Endothelial cell of umbilical vein (primary cell): ENCODE measurements at regions of chr16 and their contacts with region 1.

Region 1: GRCh38 chr16:10509534-10510025 is 70.8 kb downstream of the EMP2 start:
- DNase-seq: peak; percentile 62
- H3K4me3 ChIP-seq: no peak overlapping the region
- H3K27ac ChIP-seq: no peak overlapping the region
- H3K4me1 ChIP-seq: no peaks in the 10 kb centered on the region
- H3K27me3 ChIP-seq: peaks cover 0 to 4% of the 10 kb centered on the region in 2 experiments
- CTCF ChIP-seq: peak; percentile 57 to 65
- POLR2A ChIP-seq: no peak

Region 2: GRCh38 chr16:9159839-9160550 is 1349.6 kb before region 1 on chr16:
- CTCF ChIA-PET with region 1: interaction called, 15 read pairs
- POLR2A ChIA-PET with region 1: interaction called, 3 read pairs
- dilution Hi-C with region 1: no loop called
- intact Hi-C with region 1: loop called (anchors 2 kb)
- DNase-seq: peak; percentile 44
- H3K4me3 ChIP-seq: no peak overlapping the region
- H3K27ac ChIP-seq: no peak overlapping the region
- H3K4me1 ChIP-seq: no peaks in the 10 kb centered on the region
- H3K27me3 ChIP-seq: no peaks in the 10 kb centered on the region
- CTCF ChIP-seq: peak; percentile 43 to 70
- POLR2A ChIP-seq: no peak

Region 3: DNA sequence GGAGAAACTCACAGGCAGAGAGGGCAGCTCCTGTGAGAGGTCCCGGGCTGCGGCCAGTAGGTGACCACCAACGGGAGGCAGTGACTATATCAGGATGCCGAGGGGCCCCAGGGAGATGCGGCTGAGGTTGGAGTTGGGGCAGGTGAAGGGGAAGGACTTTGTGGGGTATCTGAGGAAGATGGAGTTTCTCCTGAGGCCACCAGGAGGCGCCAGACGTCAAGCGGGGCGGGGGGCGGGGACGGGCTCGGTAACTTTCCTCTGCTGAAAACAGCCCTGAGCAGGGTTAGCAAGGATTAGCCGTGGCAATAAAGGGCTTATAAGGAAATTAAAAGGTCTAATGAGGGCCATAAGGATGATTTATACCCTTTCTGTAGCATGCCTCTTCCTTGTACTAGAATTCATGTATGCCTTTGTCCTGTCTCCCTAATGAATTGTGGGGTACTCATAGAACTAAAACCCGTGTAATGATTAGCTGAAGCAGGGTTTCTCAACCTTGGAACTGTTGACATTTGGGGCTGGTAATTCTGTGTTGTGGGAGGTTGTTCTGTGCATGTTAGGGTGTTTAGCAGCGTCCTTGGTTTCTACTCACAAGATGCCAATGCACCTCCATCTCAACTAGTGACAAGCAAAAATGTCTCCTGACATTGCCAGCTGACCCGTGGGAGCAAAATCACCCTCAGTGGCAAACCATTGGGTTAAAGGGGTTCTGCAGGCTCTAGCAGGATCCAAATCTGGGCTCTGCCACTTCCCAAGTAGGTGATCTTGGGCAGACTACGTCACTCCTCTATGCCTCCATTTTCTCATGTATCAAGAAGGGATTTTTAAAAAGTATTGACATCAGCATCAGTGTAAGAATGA is 252.6 kb before region 1 on chr16:
- CTCF ChIA-PET with region 1: interaction called, 90 read pairs
- POLR2A ChIA-PET with region 1: no interaction called
- dilution Hi-C with region 1: no loop called
- intact Hi-C with region 1: loop called (anchors 1 kb)
- DNase-seq: peak; percentile 7
- H3K4me3 ChIP-seq: no peak overlapping the region
- H3K27ac ChIP-seq: no peak overlapping the region
- H3K4me1 ChIP-seq: no peaks in the 10 kb centered on the region
- H3K27me3 ChIP-seq: no peaks in the 10 kb centered on the region
- CTCF ChIP-seq: peak; percentile 43 to 67
- POLR2A ChIP-seq: no peak

Region 4: DNA sequence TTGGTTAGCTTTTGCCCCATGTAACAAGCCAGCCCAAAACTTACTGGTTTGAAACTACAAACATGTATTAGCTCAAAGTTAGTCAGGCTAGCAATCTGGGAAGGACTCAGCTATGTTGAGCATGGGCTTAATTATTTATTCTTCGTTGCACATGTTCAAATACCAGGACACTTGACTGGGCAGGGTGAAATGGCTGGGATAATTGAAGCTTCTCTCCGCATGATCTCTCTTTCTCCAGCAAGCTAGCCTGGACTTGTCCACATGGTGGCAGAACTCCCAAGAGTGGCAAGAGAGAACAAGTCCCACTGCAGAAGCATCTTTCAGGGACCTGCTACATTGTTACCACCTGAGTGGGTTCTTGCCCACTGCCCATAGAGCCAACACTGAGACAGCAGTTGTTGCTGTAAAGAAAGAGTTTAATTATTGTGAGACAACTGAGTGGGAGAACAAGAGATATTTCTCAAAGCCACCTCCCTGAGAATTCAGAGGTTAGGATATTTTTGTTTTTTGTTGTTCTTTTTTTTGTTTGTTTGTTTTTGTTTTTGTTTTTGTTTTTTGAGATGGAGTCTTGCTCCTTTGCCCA is 140.5 kb before region 1 on chr16:
- CTCF ChIA-PET with region 1: interaction called, 32 read pairs
- POLR2A ChIA-PET with region 1: interaction called, 7 read pairs
- dilution Hi-C with region 1: no loop called
- intact Hi-C with region 1: loop called (anchors 1 kb)
- DNase-seq: no peak
- H3K4me3 ChIP-seq: no peak overlapping the region
- H3K27ac ChIP-seq: no peak overlapping the region
- H3K4me1 ChIP-seq: no peaks in the 10 kb centered on the region
- H3K27me3 ChIP-seq: no peaks in the 10 kb centered on the region
- CTCF ChIP-seq: peak in 1 of 2 donors; percentile 23
- POLR2A ChIP-seq: no peak

Region 5: GRCh38 chr16:10447289-10447688 is 62.3 kb before region 1 on chr16:
- CTCF ChIA-PET with region 1: no interaction called
- POLR2A ChIA-PET with region 1: no interaction called
- dilution Hi-C with region 1: no loop called
- intact Hi-C with region 1: no loop called
- DNase-seq: no peak
- H3K4me3 ChIP-seq: no peak overlapping the region
- H3K27ac ChIP-seq: no peak overlapping the region
- H3K4me1 ChIP-seq: no peaks in the 10 kb centered on the region
- H3K27me3 ChIP-seq: no peaks in the 10 kb centered on the region
- CTCF ChIP-seq: no peak
- POLR2A ChIP-seq: no peak

Region 6: DNA sequence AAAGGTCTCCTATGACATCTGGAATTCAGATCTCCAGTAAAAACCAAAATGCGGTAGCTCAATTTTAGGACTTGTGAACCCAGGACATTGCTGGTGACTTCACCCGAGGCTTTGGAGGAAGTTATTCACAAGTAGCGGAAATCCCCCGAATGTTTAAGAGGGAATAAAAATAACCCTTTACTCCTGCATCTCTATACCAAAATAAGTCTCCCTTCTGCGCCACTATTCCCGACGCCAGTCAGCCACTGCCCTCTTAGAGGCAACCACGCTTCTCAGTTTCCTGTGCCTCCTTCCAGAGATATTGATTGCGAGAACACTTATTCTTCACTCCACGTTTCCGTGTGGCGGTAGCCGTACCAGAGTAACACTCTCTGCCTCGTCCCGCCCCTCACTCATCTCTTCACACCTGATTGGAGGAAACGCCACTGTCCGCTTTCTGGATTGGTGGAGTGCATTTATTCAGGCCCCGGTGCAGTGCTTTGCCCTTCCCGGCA is 43.5 kb after region 1 on chr16:
- CTCF ChIA-PET with region 1: no interaction called
- POLR2A ChIA-PET with region 1: no interaction called
- dilution Hi-C with region 1: no loop called
- intact Hi-C with region 1: no loop called
- DNase-seq: peak; percentile 13
- H3K4me3 ChIP-seq: no peak overlapping the region
- H3K27ac ChIP-seq: no peak overlapping the region
- H3K4me1 ChIP-seq: no peaks in the 10 kb centered on the region
- H3K27me3 ChIP-seq: no peaks in the 10 kb centered on the region
- CTCF ChIP-seq: no peak
- POLR2A ChIP-seq: no peak

Region 7: GRCh38 chr16:10694830-10695229 is 185.2 kb after region 1 on chr16 and contains the start of gene TEKT5:
- CTCF ChIA-PET with region 1: no interaction called
- POLR2A ChIA-PET with region 1: no interaction called
- dilution Hi-C with region 1: no loop called
- intact Hi-C with region 1: no loop called
- DNase-seq: no peak
- H3K4me3 ChIP-seq: no peak within 1 kb of the TSS
- H3K27ac ChIP-seq: no peak within 1 kb of the TSS
- H3K4me1 ChIP-seq: no peaks in the 10 kb centered on the region
- H3K27me3 ChIP-seq: no peaks in the 10 kb centered on the region
- CTCF ChIP-seq: no peak
- POLR2A ChIP-seq: no peak
- total RNA-seq, gene TEKT5: not detected in 2 replicates

Region 8: GRCh38 chr16:10731790-10732189 is 222.2 kb after region 1 on chr16:
- CTCF ChIA-PET with region 1: interaction called, 189 read pairs
- POLR2A ChIA-PET with region 1: no interaction called
- dilution Hi-C with region 1: no loop called
- intact Hi-C with region 1: no loop called
- DNase-seq: no peak
- H3K4me3 ChIP-seq: no peak overlapping the region
- H3K27ac ChIP-seq: no peak overlapping the region
- H3K4me1 ChIP-seq: no peaks in the 10 kb centered on the region
- H3K27me3 ChIP-seq: no peaks in the 10 kb centered on the region
- CTCF ChIP-seq: no peak
- POLR2A ChIP-seq: no peak

Region 9: DNA sequence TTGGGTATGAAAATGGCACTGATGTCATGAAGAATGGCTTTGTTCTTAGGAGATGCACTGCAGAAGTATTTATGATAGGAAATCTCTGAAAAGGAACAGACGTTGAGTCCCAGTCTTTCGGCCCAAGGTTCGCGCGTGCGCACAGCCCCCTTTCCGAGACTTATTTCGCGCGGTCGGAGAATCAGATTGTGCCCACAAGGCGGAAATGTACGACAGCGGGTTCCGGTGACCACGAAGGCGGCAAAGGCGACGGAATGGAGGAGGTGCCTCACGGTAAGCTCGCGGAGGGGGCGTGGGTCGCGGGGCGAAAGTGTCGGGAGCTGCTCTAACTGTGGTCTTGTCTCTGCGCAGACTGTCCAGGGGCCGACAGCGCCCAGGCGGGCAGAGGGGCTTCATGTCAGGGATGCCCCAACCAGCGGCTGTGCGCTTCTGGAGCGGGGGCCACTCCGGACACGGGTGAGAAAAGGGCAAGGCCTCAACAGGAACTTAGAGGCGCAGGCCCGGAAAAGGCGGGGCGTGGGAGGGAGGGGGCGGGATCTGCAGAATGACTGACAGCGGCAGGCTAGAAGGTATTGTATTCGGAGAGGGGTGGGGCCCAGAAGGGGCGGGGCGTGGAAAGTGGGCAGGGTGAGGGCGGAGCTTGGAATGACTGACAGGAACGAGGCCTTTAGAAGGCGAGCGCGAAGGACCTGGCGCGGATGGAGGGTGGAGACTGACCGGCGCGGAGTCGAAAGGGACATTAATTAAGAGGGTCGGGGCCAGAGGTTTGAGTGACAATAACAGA is 234.2 kb after region 1 on chr16 and contains the start of gene NUBP1:
- CTCF ChIA-PET with region 1: interaction called, 12 read pairs
- POLR2A ChIA-PET with region 1: no interaction called
- dilution Hi-C with region 1: no loop called
- intact Hi-C with region 1: no loop called
- DNase-seq: peak; percentile 100
- H3K4me3 ChIP-seq: peak within 1 kb of the TSS; percentile 3 to 72 (median 56)
- H3K27ac ChIP-seq: peak within 1 kb of the TSS; percentile 80
- H3K4me1 ChIP-seq: peaks cover 7% of the 10 kb centered on the region
- H3K27me3 ChIP-seq: no peaks in the 10 kb centered on the region
- CTCF ChIP-seq: no peak
- POLR2A ChIP-seq: peak; percentile 86
- total RNA-seq, gene NUBP1: 23.6 and 28.7 TPM in 2 replicates